SK-N-SH (cell line): ENCODE measurements at regions of chr1 and their contacts with region 1.

Region 1: GRCh38 chr1:210448297-210448892 is 119.7 kb downstream of the HHAT start:
- DNase-seq: peak; percentile 60
- H3K4me3 ChIP-seq: no peak overlapping the region
- H3K27ac ChIP-seq: no peak overlapping the region
- H3K4me1 ChIP-seq: peaks cover 3 to 9% of the 10 kb centered on the region in 2 experiments; a peak in 3 of 4 replicates
- H3K27me3 ChIP-seq: no peaks in the 10 kb centered on the region
- CTCF ChIP-seq: peak; percentile 90
- EP300 ChIP-seq: 0 out of 4 replicates have a peak, but pooled peaks of 1 of the 2 experiments have one; percentile 34
- RAD21 ChIP-seq: peak; percentile 96

Region 2: DNA sequence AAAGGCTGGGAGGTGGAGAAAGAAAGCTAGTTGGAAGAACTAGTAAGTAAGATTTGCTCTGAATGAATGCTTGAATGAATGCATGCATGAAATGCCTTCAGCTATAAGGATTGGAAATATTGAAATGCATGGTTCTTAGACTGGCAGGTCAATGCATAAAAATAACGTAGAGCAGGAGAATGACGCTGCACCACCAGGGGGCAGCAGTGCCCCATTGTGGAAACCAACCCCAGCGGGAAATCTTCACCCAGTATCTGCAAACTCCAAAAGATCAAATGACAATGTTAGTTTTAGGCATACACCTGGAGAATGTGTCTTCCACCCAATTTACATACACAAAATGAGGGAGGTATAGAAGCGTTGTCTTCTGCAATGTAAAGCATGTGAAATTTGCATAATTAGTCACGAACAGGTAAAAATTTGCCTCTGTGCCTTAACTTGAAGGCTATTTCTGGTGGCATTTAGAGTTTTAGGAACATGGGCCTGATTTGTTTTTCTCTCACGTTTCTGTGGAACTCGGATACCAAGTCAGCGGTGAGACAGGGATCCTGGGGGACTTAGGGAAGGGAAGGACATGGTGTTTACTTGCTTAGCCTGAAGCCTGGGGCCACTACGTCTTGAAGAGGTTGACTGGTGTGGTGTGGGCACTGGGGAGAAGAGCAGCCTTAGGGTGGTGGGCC is 41.0 kb before region 1 on chr1:
- CTCF ChIA-PET with region 1: interaction called, 21 read pairs
- POLR2A ChIA-PET with region 1: no interaction called
- DNase-seq: peak; percentile 70
- H3K4me3 ChIP-seq: no peak overlapping the region; a peak in 1 of 4 replicates
- H3K27ac ChIP-seq: no peak overlapping the region
- H3K4me1 ChIP-seq: no peaks in the 10 kb centered on the region
- H3K27me3 ChIP-seq: no peaks in the 10 kb centered on the region
- CTCF ChIP-seq: peak; percentile 98
- EP300 ChIP-seq: no peak
- RAD21 ChIP-seq: peak; percentile 95

Region 3: GRCh38 chr1:210505601-210506496 is 57.5 kb after region 1 on chr1:
- CTCF ChIA-PET with region 1: interaction called, 14 read pairs
- POLR2A ChIA-PET with region 1: no interaction called
- DNase-seq: no peak
- H3K4me3 ChIP-seq: no peak overlapping the region
- H3K27ac ChIP-seq: peak overlapping the region in 1 of 2 experiments; percentile 81; a peak in 2 of 4 replicates
- H3K4me1 ChIP-seq: peaks cover 0 to 21% of the 10 kb centered on the region in 2 experiments; a peak in 2 of 4 replicates
- H3K27me3 ChIP-seq: no peaks in the 10 kb centered on the region
- CTCF ChIP-seq: no peak
- EP300 ChIP-seq: peak in 1 of 2 experiments; percentile 13; a peak in 1 of 4 replicates
- RAD21 ChIP-seq: no peak

Region 4: DNA sequence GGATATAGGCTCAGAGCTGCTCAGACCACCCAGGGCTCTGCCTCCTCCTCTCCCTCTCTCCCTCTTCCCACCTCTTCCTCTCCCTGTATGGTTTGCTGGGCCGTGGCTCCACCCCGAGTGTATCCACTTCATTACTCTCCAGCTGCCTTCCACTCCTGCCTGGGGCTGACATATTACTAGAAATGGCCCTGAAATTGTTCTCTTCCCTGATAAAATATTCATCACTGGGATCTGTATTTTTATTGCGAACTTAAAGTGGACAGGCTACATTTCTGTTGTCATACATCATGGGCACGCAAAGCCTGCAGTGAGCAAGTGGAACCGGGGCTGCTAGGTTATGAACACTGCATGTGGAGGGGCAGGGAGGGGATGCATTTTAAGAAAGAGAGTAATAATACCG is 105.3 kb after region 1 on chr1:
- CTCF ChIA-PET with region 1: interaction called, 10 read pairs
- POLR2A ChIA-PET with region 1: no interaction called
- DNase-seq: peak; percentile 36
- H3K4me3 ChIP-seq: no peak overlapping the region
- H3K27ac ChIP-seq: no peak overlapping the region
- H3K4me1 ChIP-seq: peaks cover 0 to 29% of the 10 kb centered on the region in 2 experiments; a peak in 2 of 4 replicates
- H3K27me3 ChIP-seq: no peaks in the 10 kb centered on the region
- CTCF ChIP-seq: no peak
- EP300 ChIP-seq: no peak; a peak in 1 of 4 replicates
- RAD21 ChIP-seq: peak; percentile 24; the same call in 1 of the 2 replicates

Region 5: GRCh38 chr1:210568631-210569030 is 120.2 kb after region 1 on chr1:
- CTCF ChIA-PET with region 1: interaction called, 12 read pairs
- POLR2A ChIA-PET with region 1: interaction called, 3 read pairs
- DNase-seq: no peak
- H3K4me3 ChIP-seq: no peak overlapping the region
- H3K27ac ChIP-seq: no peak overlapping the region
- H3K4me1 ChIP-seq: peaks cover 0 to 37% of the 10 kb centered on the region in 2 experiments; a peak in 2 of 4 replicates
- H3K27me3 ChIP-seq: no peaks in the 10 kb centered on the region
- CTCF ChIP-seq: no peak
- EP300 ChIP-seq: no peak
- RAD21 ChIP-seq: no peak

Region 6: DNA sequence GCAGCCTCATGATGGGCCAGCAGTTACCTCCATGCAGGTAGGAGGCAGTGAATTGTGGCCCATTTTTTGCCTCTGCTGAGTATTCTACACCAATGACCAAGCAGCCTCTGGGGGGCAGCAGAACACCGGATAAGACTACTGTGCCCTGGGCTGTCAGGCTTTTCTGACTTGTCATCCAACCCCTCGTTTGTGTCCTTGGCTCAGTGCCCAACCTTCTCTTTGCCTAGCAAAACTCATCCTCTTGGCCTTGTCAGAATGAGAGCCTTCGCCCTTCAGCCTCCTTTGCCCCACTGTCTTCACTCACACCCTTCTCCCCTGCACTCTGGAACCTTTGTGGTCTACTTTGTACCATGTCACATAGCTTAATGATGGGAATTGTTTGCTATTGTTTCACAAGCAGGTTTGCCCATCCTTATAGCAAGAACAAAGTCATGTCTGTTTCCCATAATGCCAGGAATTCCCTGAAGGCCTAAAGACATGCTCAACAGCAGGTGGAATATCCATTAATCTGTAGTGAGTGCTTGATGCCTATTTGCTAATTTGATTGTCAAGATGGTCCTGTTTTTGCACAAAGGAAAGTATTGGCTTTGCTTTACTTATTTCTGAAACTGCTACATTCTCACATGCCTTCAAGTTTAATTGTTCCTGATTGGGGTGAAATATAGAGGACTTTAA is 136.2 kb after region 1 on chr1:
- CTCF ChIA-PET with region 1: interaction called, 83 read pairs
- POLR2A ChIA-PET with region 1: no interaction called
- DNase-seq: peak; percentile 75
- H3K4me3 ChIP-seq: no peak overlapping the region
- H3K27ac ChIP-seq: peak overlapping the region in 1 of 2 experiments; percentile 95; a peak in 2 of 4 replicates
- H3K4me1 ChIP-seq: peaks cover 0 to 16% of the 10 kb centered on the region in 2 experiments; a peak in 2 of 4 replicates
- H3K27me3 ChIP-seq: no peaks in the 10 kb centered on the region
- CTCF ChIP-seq: peak; percentile 88
- EP300 ChIP-seq: peak in 1 of 2 experiments; percentile 90; a peak in 2 of 4 replicates
- RAD21 ChIP-seq: peak; percentile 98

Region 7: GRCh38 chr1:210600421-210601159 is 152.2 kb after region 1 on chr1:
- CTCF ChIA-PET with region 1: no interaction called
- POLR2A ChIA-PET with region 1: no interaction called
- DNase-seq: no peak
- H3K4me3 ChIP-seq: no peak overlapping the region
- H3K27ac ChIP-seq: no peak overlapping the region
- H3K4me1 ChIP-seq: peaks cover 11 to 25% of the 10 kb centered on the region in 2 experiments; a peak in 3 of 4 replicates
- H3K27me3 ChIP-seq: no peaks in the 10 kb centered on the region
- CTCF ChIP-seq: no peak
- EP300 ChIP-seq: no peak
- RAD21 ChIP-seq: no peak